IMR-90 (cell line): ENCODE measurements at regions of chr2 and their contacts with region 1.

Region 1: DNA sequence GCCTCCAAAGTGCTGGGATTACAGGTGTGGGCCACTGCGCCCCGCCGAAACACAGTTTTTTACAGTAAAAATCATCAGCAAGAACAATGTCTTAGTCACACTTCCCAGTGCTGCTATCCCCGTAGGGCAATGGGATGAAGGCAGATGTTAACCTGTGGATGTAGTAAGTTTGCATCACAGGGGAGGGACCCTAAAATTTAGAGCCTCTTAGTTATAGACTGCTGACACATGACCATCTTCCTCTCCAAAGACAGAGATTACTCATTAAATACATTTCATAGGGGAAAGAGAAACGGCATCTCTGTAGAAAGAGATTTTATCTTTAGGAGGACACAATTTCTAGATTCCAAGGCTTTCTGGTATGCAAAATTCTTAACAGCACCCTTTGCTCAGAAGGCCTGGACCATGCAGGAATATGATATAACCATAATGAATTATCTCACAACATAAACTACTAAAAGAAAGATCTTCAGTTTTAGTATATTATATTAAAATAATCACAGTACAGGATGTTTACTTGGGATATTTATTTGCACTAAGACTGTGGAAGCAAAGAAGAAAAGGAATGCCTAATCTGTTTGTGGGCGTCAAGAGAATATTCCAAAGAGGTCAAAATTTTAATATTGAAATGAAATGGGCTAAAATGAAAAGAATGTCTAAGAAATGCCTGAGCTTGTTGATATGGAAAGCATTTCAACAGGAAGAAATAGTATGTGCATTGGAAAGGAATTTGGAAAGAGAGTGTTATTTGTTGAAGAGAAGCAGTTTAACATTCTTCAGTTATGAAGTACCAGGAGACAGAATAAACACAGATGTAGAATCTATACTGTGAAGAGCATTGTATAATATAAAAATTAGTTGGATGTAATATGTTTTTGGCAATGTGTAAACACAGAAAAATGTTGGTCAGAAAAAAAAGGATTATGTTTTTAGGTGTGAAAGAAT is 1228.3 kb upstream of the CHAC2 start:
- DNase-seq: peak; percentile 86
- ATAC-seq: peak; percentile 88
- H3K4me3 ChIP-seq: no peak overlapping the region
- H3K27ac ChIP-seq: peak overlapping the region; percentile 98
- H3K4me1 ChIP-seq: peaks cover 12% of the 10 kb centered on the region
- H3K27me3 ChIP-seq: no peaks in the 10 kb centered on the region
- CTCF ChIP-seq: no peak
- POLR2A ChIP-seq: no peak
- RAD21 ChIP-seq: no peak

Region 2: GRCh38 chr2:50529600-50530218 is 2009.6 kb before region 1 on chr2:
- CTCF ChIA-PET with region 1: no interaction called
- POLR2A ChIA-PET with region 1: no interaction called
- dilution Hi-C with region 1: no loop called
- in situ Hi-C with region 1: no loop called
- intact Hi-C with region 1: loop called (anchors 10 kb)
- DNase-seq: peak; percentile 71
- ATAC-seq: peak; percentile 92
- H3K4me3 ChIP-seq: no peak overlapping the region
- H3K27ac ChIP-seq: no peak overlapping the region
- H3K4me1 ChIP-seq: no peaks in the 10 kb centered on the region
- H3K27me3 ChIP-seq: no peaks in the 10 kb centered on the region
- CTCF ChIP-seq: peak; percentile 79
- POLR2A ChIP-seq: no peak
- RAD21 ChIP-seq: peak; percentile 79

Region 3: GRCh38 chr2:52144585-52144984 is 394.7 kb before region 1 on chr2:
- CTCF ChIA-PET with region 1: no interaction called
- POLR2A ChIA-PET with region 1: no interaction called
- dilution Hi-C with region 1: no loop called
- in situ Hi-C with region 1: no loop called
- intact Hi-C with region 1: loop called (anchors 2 kb)
- DNase-seq: peak; percentile 1
- ATAC-seq: peak; percentile 49
- H3K4me3 ChIP-seq: no peak overlapping the region
- H3K27ac ChIP-seq: no peak overlapping the region
- H3K4me1 ChIP-seq: no peaks in the 10 kb centered on the region
- H3K27me3 ChIP-seq: no peaks in the 10 kb centered on the region
- CTCF ChIP-seq: no peak
- POLR2A ChIP-seq: no peak
- RAD21 ChIP-seq: peak; percentile 23; the same call in 1 of the 2 replicates

Region 4: DNA sequence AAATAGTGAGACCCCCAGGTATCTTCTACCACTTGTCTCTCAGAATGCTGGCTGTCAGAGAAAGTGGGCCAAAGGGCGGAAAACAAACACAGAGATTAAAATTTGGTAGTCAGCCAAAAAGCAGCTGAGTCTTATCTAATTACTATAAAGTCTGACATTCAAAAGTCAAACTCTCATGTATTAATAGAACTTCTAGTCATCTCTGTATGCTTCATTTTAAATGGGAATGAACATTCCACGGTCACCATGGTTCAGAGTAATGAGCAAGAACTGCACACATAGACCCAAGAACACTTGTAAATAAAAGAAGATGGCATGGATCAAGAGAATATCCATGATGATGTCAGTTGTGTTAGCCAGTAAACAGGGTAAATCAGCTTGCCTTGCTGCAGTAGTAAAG is 38.7 kb before region 1 on chr2:
- CTCF ChIA-PET with region 1: no interaction called
- POLR2A ChIA-PET with region 1: no interaction called
- dilution Hi-C with region 1: no loop called
- in situ Hi-C with region 1: no loop called
- intact Hi-C with region 1: no loop called
- DNase-seq: no peak
- ATAC-seq: no peak
- H3K4me3 ChIP-seq: no peak overlapping the region
- H3K27ac ChIP-seq: no peak overlapping the region
- H3K4me1 ChIP-seq: no peaks in the 10 kb centered on the region
- H3K27me3 ChIP-seq: no peaks in the 10 kb centered on the region
- CTCF ChIP-seq: no peak
- POLR2A ChIP-seq: no peak
- RAD21 ChIP-seq: no peak

Region 5: DNA sequence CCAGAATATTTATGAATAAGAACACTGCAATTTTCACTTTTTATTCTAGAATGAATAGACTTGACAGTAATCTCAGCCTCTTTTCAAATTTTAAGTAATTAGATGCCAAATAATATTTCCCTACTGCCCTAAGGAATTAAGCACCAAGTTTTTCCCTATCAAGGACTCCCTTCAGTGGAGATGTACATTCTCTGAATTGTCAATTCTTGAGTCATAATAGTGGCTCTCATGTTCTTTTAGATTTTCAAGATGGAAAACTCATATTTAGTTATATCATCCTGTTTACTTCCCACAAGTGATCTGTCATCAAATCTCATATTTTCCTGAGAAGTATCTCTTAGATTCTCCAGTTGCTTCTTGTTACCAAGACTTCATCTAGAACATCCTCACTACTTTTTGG is 20.6 kb before region 1 on chr2:
- CTCF ChIA-PET with region 1: no interaction called
- POLR2A ChIA-PET with region 1: no interaction called
- dilution Hi-C with region 1: no loop called
- in situ Hi-C with region 1: no loop called
- intact Hi-C with region 1: no loop called
- DNase-seq: peak; percentile 45
- ATAC-seq: peak; percentile 57
- H3K4me3 ChIP-seq: no peak overlapping the region
- H3K27ac ChIP-seq: no peak overlapping the region
- H3K4me1 ChIP-seq: no peaks in the 10 kb centered on the region
- H3K27me3 ChIP-seq: no peaks in the 10 kb centered on the region
- CTCF ChIP-seq: no peak
- POLR2A ChIP-seq: no peak
- RAD21 ChIP-seq: no peak

Region 6: GRCh38 chr2:52970642-52971041 is 431.3 kb after region 1 on chr2:
- CTCF ChIA-PET with region 1: no interaction called
- POLR2A ChIA-PET with region 1: no interaction called
- dilution Hi-C with region 1: no loop called
- in situ Hi-C with region 1: no loop called
- intact Hi-C with region 1: loop called (anchors 5 kb)
- DNase-seq: no peak
- ATAC-seq: no peak
- H3K4me3 ChIP-seq: no peak overlapping the region
- H3K27ac ChIP-seq: no peak overlapping the region
- H3K4me1 ChIP-seq: no peaks in the 10 kb centered on the region
- H3K27me3 ChIP-seq: no peaks in the 10 kb centered on the region
- CTCF ChIP-seq: no peak
- POLR2A ChIP-seq: no peak
- RAD21 ChIP-seq: no peak

Region 7: DNA sequence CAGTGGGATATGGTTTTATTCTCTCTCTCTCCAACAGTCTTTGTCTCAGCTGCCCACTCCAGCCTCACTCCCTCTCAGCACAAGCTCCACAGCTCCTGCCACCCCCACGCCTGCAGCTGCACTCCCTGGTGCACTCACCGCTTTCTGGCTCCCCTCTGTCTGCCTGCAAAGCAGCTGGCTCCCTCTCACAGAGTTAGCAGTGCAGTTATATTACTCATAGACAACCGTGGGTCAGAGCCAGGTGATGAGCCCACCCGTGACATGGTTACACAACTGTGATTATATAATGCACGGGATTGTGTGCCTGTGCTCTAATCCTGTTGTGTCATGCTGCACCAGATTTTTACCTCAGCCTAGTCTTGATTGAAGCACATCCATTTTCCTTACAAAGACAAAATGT is 951.4 kb after region 1 on chr2:
- CTCF ChIA-PET with region 1: no interaction called
- POLR2A ChIA-PET with region 1: no interaction called
- dilution Hi-C with region 1: no loop called
- in situ Hi-C with region 1: no loop called
- intact Hi-C with region 1: loop called (anchors 10 kb)
- DNase-seq: peak; percentile 85
- ATAC-seq: peak; percentile 84
- H3K4me3 ChIP-seq: no peak overlapping the region
- H3K27ac ChIP-seq: no peak overlapping the region; the same call in 1 of the 2 replicates
- H3K4me1 ChIP-seq: peaks cover 18% of the 10 kb centered on the region
- H3K27me3 ChIP-seq: no peaks in the 10 kb centered on the region
- CTCF ChIP-seq: no peak
- POLR2A ChIP-seq: no peak
- RAD21 ChIP-seq: no peak